Psoas muscle (tissue), 8 donors: ENCODE measurements at regions of chr19 and their contacts with region 1.

Region 1: DNA sequence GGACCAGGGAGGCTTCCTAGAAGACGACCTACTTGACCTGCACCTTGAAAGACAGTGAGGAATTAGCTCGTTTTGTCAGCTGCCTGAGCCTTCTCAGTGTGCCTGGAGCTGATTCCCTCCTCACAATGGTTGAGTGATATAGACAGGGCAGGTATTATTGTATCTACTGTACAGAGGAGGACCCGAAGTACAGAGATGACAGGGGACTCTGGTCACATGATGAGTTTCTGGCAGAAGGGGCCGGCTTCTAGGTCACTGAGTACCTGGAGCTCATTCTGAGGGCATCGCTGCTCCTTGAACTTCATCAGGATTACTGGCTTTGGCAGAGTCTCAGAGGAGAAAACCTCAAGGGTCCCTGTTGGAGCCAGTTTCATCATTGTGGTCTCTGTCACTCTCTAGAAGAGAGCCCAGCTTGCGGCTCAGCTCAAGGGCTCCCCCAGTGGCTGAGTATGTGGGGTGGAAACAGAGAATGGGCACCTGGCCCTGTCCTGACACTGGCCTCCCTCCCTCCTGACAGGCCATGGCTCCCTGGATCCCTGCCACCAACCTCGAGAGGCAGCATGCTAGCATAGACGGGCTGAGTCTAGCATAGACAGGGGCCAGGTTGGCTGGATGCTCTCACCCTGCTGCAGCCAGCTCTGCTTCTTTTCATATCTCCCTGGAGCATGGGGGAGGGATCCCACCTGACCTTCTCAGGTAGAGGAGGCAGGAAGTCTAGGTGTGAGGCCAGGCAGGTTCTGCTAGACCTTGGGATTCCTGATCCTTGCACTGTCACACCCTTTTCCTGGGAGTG is 38.7 kb downstream of the NFIX start:
- DNase-seq: peak; percentile 85 to 94
- ATAC-seq: peak; percentile 61 to 66 (median 64)
- H3K4me3 ChIP-seq: no peak overlapping the region
- H3K27ac ChIP-seq: peak overlapping the region; percentile 99
- H3K4me1 ChIP-seq: peaks cover 98% of the 10 kb centered on the region
- H3K27me3 ChIP-seq: no peaks in the 10 kb centered on the region
- CTCF ChIP-seq: peak; percentile 86

Region 2: DNA sequence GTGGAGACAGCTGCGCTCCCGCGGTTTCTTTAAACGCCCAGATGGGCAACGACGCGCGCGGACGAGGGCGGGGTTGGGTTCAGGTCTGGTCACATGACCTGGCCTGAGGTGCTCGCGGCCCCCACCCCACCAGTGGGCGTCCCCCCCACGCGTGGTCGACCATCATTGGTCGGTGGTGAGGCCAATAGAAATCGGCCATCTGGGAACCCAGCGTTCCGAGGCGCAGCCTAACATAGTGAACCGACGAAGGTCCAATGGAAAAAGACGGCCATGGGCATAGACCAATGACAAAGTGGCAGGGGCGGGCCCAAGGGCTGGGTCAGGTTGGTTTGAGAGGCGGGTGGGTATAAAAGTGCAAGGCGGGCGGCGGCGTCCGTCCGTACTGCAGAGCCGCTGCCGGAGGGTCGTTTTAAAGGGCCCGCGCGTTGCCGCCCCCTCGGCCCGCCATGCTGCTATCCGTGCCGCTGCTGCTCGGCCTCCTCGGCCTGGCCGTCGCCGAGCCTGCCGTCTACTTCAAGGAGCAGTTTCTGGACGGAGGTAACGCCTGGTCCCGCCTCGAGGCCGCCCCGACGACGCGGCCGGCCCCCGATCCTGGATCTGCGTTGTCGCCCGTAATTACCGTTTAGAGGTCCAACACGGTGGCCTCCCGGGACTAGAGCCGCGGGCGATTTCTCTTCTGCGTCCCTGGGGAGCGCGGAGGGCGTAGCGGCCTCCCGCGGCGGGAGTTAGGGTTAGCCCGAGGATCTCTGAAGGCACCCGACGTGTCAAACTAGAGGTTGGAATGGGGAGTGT is 95.6 kb before region 1 on chr19 and contains the start of gene CALR:
- intact Hi-C with region 1: no loop called
- DNase-seq: peak; percentile 100
- ATAC-seq: peak; percentile 91 to 94 (median 92)
- H3K4me3 ChIP-seq: peak within 1 kb of the TSS; percentile 98
- H3K27ac ChIP-seq: peak within 1 kb of the TSS; percentile 98
- H3K4me1 ChIP-seq: peaks cover 23% of the 10 kb centered on the region
- H3K27me3 ChIP-seq: no peaks in the 10 kb centered on the region
- CTCF ChIP-seq: peak; percentile 25
- total RNA-seq, gene CALR: 124 to 219 (median 175) TPM

Region 3: GRCh38 chr19:12994701-12995595 is 39.1 kb before region 1 on chr19 and contains the start of gene NFIX:
- intact Hi-C with region 1: loop called in 1 of 2 experiments (anchors 5 kb)
- DNase-seq: peak; percentile 79 to 89
- ATAC-seq: peak; percentile 34 to 43 (median 38)
- H3K4me3 ChIP-seq: peak within 1 kb of the TSS; percentile 95
- H3K27ac ChIP-seq: peak within 1 kb of the TSS; percentile 99
- H3K4me1 ChIP-seq: peaks cover 28% of the 10 kb centered on the region
- H3K27me3 ChIP-seq: no peaks in the 10 kb centered on the region
- CTCF ChIP-seq: no peak
- total RNA-seq, gene NFIX: 220 to 347 (median 268) TPM

Region 4: DNA sequence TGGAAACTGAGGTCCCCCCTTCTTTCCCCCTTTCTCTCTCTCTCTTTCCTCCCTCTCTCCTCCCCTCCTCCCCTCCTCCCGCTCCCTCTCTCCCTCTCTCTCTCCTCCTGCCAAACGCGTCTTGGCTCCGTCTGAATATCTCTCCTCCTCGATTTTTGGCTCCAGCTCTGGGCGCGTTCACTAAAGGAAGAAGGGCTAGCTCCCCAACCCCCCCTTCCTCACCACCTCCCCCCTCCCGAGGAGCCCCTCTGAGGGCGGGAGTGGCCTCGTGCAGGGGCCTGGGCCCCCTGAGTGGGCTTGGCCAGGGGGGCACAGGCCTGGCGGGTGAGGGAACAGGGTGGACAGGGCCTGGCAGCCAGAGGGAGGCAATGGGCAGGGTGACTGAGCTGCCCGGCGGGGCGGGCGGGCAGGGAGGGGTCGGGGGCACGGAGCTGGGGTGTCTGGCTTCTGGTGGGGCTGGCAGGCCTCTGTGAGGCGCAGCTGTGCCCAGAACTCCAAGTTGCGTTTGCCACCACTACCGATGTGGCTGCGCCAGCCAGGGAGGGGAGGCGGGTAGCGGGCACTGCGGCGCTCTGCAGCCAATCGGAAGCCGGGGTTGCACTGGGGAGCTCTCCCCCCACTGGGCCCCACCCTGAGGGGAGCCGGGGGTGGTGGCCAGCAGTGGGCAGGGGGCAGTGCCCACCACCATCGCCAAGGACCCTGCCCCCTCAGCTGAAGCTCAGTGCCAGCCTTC is 31.7 kb before region 1 on chr19:
- intact Hi-C with region 1: loop called (anchors 2 to 5 kb)
- DNase-seq: peak; percentile 82 to 92
- ATAC-seq: peak; percentile 67 to 71 (median 69)
- H3K4me3 ChIP-seq: peak overlapping the region; percentile 60
- H3K27ac ChIP-seq: peak overlapping the region; percentile 99
- H3K4me1 ChIP-seq: peaks cover 75% of the 10 kb centered on the region
- H3K27me3 ChIP-seq: no peaks in the 10 kb centered on the region
- CTCF ChIP-seq: no peak

Region 5: GRCh38 chr19:13060964-13061927 is 27.2 kb after region 1 on chr19:
- intact Hi-C with region 1: loop called (anchors 2 to 5 kb)
- DNase-seq: peak; percentile 87 to 93
- ATAC-seq: peak; percentile 62 to 73 (median 66)
- H3K4me3 ChIP-seq: peak overlapping the region; percentile 52
- H3K27ac ChIP-seq: peak overlapping the region; percentile 81
- H3K4me1 ChIP-seq: peaks cover 98% of the 10 kb centered on the region
- H3K27me3 ChIP-seq: no peaks in the 10 kb centered on the region
- CTCF ChIP-seq: peak; percentile 98

Region 6: DNA sequence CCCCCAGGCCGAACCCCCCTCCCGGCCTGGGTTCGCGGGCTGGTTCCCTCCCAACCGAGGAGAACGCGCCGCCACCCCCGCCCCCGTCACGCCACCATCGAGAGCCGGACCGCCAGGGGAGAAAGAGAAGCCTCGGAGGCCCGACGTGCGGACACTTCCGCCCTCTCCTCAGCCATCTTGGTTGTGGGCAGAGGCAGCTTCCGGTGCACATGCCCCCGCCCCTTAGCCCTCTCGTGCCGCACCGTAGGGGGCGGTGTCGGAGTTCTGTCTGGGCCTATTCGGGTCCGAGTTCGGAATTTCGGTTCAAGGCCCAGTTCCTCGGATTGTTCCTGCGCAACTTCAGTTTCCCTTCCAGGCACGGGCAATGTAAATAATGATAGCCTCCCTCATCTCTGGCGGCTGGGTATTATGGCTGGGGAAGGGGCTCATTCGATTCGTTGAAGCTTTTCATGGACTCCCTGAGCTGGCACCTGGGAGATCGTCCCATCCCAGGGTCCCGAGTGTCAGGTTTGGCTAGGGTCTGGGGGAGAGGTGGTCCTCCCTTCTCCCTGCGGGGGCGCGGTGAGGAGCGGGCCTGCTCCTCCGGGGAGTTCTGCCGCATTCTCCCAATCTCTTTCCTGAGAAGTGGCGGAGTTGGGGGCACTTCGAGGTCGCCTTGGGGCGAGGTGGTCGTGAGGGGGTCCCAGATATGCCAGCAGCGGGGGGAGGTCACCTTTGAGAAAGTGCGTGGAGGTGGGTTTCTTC is 116.3 kb after region 1 on chr19 and contains the starts of genes IER2 and STX10:
- intact Hi-C with region 1: no loop called
- DNase-seq: peak; percentile 96 to 98
- ATAC-seq: peak; percentile 74 to 80 (median 75)
- H3K4me3 ChIP-seq: peak within 1 kb of the TSS; percentile 93
- H3K27ac ChIP-seq: peak within 1 kb of the TSS; percentile 96
- H3K4me1 ChIP-seq: peaks cover 22% of the 10 kb centered on the region
- H3K27me3 ChIP-seq: no peaks in the 10 kb centered on the region
- CTCF ChIP-seq: peak; percentile 54
- total RNA-seq, gene IER2: 16.8 to 31.2 (median 29.9) TPM
- total RNA-seq, gene STX10: 18.5 to 20.4 (median 19.3) TPM